ENCODE measurements at regions of chr12 and their contacts with region 1.

Region 1: GRCh38 chr12:42144408-42145196 is at the start of gene GXYLT1:
- DNase-seq: peak; percentile 83 to 94
- H3K4me3 ChIP-seq: peak within 1 kb of the TSS; percentile 99
- H3K27ac ChIP-seq: peak within 1 kb of the TSS; percentile 70
- H3K4me1 ChIP-seq: peaks cover 22% of the 10 kb centered on the region
- H3K27me3 ChIP-seq: no peaks in the 10 kb centered on the region
- CTCF ChIP-seq: no peak
- total RNA-seq, gene GXYLT1: 7.8 TPM in 2 replicates

Region 2: DNA sequence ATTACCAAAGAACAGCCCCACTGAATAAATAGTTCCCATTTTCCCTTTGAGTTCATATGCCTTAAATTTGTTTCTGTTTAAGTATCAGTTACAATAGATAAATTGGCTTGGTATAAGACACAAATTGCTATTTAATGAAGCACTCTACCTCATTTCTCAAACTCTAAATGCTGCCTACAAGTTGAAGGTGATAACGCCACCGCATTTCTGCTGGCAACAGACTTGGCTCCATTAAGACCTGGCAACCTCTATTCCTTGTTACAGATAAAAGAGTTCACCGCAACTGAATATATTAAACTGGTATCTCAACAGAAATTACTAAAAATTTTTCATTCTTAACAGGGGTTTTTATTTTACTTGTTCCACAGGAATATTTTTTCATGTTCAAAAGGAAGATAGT is 35.6 kb before region 1 on chr12:
- CTCF ChIA-PET with region 1: no interaction called
- POLR2A ChIA-PET with region 1: no interaction called
- intact Hi-C with region 1: no loop called
- DNase-seq: no peak
- H3K4me3 ChIP-seq: no peak overlapping the region
- H3K27ac ChIP-seq: no peak overlapping the region
- H3K4me1 ChIP-seq: no peaks in the 10 kb centered on the region
- H3K27me3 ChIP-seq: no peaks in the 10 kb centered on the region
- CTCF ChIP-seq: no peak

Region 3: DNA sequence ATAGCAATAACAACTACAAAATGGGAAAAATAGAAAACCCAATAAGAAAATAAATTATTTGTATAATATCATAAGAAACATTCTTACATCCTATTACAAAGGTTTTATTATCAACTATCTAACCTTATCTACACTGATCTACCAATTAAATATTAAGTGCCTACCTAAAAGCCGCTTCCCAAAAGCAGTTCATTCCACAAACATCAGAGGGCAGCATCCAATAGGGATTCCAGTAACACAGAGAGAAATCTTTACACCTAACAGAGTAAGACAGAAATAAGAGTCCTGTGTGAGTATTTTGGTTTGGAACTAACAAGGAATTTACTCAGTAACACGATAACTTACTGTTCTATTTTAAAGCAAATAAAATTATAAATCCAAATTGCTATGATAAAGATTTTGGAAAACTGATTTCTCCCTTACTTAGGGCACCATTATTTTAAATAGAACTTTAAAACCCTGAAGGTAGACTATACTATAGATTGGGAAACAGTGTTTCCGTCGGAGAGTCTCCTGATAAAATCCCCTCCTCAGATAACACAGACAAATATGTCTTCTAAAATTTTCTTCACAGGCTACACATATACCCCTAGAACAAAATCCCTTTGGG is 14.9 kb before region 1 on chr12:
- CTCF ChIA-PET with region 1: no interaction called
- POLR2A ChIA-PET with region 1: interaction called, 11 read pairs
- intact Hi-C with region 1: no loop called
- DNase-seq: peak; percentile 41 to 46
- H3K4me3 ChIP-seq: no peak overlapping the region
- H3K27ac ChIP-seq: peak overlapping the region; percentile 64
- H3K4me1 ChIP-seq: peaks cover 21% of the 10 kb centered on the region
- H3K27me3 ChIP-seq: no peaks in the 10 kb centered on the region
- CTCF ChIP-seq: peak; percentile 88

Region 4: DNA sequence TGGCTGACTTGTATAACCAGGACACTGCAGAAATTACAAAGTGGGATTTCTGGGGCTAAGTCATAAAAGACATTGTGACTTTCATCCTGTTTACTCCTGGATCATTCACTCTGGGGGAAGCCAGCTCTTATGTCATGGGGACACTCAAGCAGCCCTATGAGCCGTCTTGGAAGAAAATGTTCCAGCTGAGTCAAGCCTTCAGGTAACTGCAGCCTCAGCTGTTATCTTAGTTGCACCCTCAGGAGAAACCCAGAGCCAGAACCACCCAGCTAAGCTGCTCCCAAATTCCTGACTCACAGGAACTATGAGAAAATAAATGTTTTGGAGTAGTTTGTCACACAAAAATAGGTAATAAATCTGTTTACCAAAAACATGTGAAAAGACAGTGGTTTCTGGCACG is 43.2 kb after region 1 on chr12:
- CTCF ChIA-PET with region 1: interaction called, 11 read pairs
- POLR2A ChIA-PET with region 1: no interaction called
- intact Hi-C with region 1: no loop called
- DNase-seq: no peak
- H3K4me3 ChIP-seq: no peak overlapping the region
- H3K27ac ChIP-seq: no peak overlapping the region
- H3K4me1 ChIP-seq: no peaks in the 10 kb centered on the region
- H3K27me3 ChIP-seq: no peaks in the 10 kb centered on the region
- CTCF ChIP-seq: no peak

Region 5: GRCh38 chr12:42237052-42237852 is 92.7 kb after region 1 on chr12:
- CTCF ChIA-PET with region 1: no interaction called
- POLR2A ChIA-PET with region 1: interaction called, 8 read pairs
- intact Hi-C with region 1: loop called (anchors 5 kb)
- DNase-seq: peak; percentile 64 to 67
- H3K4me3 ChIP-seq: peak overlapping the region; percentile 74
- H3K27ac ChIP-seq: 0 out of 2 replicates have a peak overlapping the region, but pooled peaks have one; percentile 26
- H3K4me1 ChIP-seq: peaks cover 19% of the 10 kb centered on the region
- H3K27me3 ChIP-seq: no peaks in the 10 kb centered on the region
- CTCF ChIP-seq: peak; percentile 50; the same call in 1 of the 2 replicates

Region 6: GRCh38 chr12:42325653-42326474 is 181.3 kb after region 1 on chr12 and contains the starts of genes PPHLN1 and ZCRB1:
- CTCF ChIA-PET with region 1: no interaction called
- POLR2A ChIA-PET with region 1: interaction called, 16 read pairs
- intact Hi-C with region 1: loop called (anchors 5 kb)
- DNase-seq: peak; percentile 71 to 73
- H3K4me3 ChIP-seq: peak within 1 kb of the TSS; percentile 95
- H3K27ac ChIP-seq: peak within 1 kb of the TSS; percentile 64
- H3K4me1 ChIP-seq: peaks cover 17% of the 10 kb centered on the region
- H3K27me3 ChIP-seq: no peaks in the 10 kb centered on the region
- CTCF ChIP-seq: no peak
- total RNA-seq, gene PPHLN1: 51.1 and 61.9 TPM in 2 replicates
- total RNA-seq, gene ZCRB1: 62.7 and 69.3 TPM in 2 replicates

Region 7: GRCh38 chr12:42568952-42569915 is 424.6 kb after region 1 on chr12:
- CTCF ChIA-PET with region 1: no interaction called
- POLR2A ChIA-PET with region 1: no interaction called
- intact Hi-C with region 1: loop called (anchors 5 kb)
- DNase-seq: peak in 1 of 2 experiments; percentile 47
- H3K4me3 ChIP-seq: no peak overlapping the region
- H3K27ac ChIP-seq: peak overlapping the region; percentile 61
- H3K4me1 ChIP-seq: peaks cover 15% of the 10 kb centered on the region
- H3K27me3 ChIP-seq: no peaks in the 10 kb centered on the region
- CTCF ChIP-seq: peak; percentile 65